ENCODE measurements at regions of chr22 and their contacts with region 1.

Region 1: DNA sequence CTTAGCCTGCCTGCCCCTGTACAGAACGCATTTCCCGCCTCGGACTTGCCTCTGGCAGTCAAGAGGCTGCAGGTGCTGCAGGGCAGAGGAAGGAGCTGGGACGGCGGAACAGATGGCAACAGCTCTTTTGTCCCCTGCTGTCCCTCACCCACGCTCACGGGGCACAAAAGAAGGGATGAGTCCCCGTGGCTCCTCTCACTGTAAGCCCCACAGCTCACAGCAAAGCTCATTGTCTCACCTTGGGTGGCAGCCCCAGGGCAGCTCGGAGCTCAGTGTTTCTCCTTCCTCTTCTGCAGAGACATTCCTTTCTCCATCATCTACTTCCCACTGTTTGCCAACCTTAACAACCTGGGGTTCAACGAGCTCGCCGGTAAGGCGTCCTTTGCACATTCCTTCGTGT is 24.3 kb downstream of the SLC25A18 start:
- DNase-seq: no peak
- ATAC-seq: no peak
- H3K4me3 ChIP-seq: no peak overlapping the region
- H3K27ac ChIP-seq: no peak overlapping the region
- H3K4me1 ChIP-seq: no peaks in the 10 kb centered on the region
- H3K27me3 ChIP-seq: no peaks in the 10 kb centered on the region
- CTCF ChIP-seq: no peak
- POLR2A ChIP-seq: no peak
- RAD21 ChIP-seq: no peak

Region 2: GRCh38 chr22:17655289-17655688 is 67.7 kb after region 1 on chr22:
- CTCF ChIA-PET with region 1: no interaction called
- POLR2A ChIA-PET with region 1: no interaction called
- dilution Hi-C with region 1: no loop called
- in situ Hi-C with region 1: no loop called
- intact Hi-C with region 1: loop called (anchors 5 kb)
- DNase-seq: no peak
- ATAC-seq: no peak
- H3K4me3 ChIP-seq: no peak overlapping the region
- H3K27ac ChIP-seq: no peak overlapping the region
- H3K4me1 ChIP-seq: no peaks in the 10 kb centered on the region
- H3K27me3 ChIP-seq: no peaks in the 10 kb centered on the region
- CTCF ChIP-seq: no peak
- POLR2A ChIP-seq: no peak
- RAD21 ChIP-seq: no peak